ENCODE measurements at regions of chr7 and their contacts with region 1.

Region 1: DNA sequence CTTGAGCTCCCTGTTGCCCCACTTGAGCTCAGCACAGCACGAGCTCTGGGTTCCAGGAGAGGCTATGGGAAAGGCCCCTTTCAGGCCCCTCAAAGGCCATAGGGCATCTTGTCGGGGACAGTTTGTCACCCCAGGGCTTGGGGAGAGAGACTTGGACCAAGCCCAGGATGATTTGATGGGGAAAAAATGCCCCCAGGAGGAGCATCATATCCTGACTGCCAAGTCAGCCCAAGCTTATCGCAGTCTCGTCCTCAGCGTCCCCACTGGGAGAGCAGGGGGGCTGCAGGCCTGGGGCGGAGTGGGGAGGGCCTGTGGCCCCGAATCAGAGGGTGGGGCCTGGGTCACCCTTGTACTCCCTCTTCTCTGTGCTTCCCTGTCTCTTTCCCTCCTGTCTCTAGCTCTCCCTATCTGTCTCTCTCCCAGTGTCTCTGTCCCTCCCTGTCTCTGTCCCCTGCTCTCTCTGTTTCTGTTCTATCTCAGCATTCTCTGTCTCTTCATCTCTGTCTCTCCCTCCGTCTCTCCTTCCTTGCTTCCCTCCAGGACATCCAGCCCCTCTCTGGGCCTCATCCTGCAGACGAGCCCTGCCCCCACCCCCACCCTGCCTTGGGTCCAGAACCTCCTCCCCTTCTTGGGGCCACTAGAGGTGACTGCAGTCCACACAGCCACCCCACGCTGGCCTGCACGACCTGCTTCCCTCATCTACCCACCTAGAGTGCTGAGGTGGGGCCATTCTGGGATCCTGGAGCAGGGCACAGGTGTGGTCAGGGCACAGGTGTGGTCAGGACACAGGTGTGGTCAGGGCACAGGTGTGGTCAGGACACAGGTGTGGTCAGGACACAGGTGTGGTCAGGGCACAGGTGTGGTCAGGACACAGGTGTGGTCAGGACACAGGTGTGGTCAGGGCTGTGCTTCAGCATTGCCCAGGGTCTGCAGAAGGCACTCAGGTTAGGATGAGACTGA is 17.3 kb upstream of the GRIFIN start:
- DNase-seq: no peak
- ATAC-seq: no peak
- H3K4me3 Mint-ChIP-seq: no peak overlapping the region
- H3K27ac Mint-ChIP-seq: no peak overlapping the region
- H3K4me1 Mint-ChIP-seq: peaks cover 2% of the 10 kb centered on the region
- H3K27me3 Mint-ChIP-seq: peaks cover 15% of the 10 kb centered on the region

Region 2: GRCh38 chr7:2519119-2519930 is 25.8 kb after region 1 on chr7 and contains the start of gene LFNG:
- POLR2A ChIA-PET with region 1: no interaction called
- DNase-seq: peak; percentile 96
- ATAC-seq: peak; percentile 69
- H3K4me3 Mint-ChIP-seq: peak within 1 kb of the TSS; percentile 97
- H3K27ac Mint-ChIP-seq: peak within 1 kb of the TSS; percentile 90
- H3K4me1 Mint-ChIP-seq: peaks cover 12% of the 10 kb centered on the region
- H3K27me3 Mint-ChIP-seq: no peaks in the 10 kb centered on the region
- total RNA-seq, gene LFNG: 115 to 121 TPM

Region 3: GRCh38 chr7:2555121-2556052 is 61.9 kb after region 1 on chr7 and contains the start of gene BRAT1:
- POLR2A ChIA-PET with region 1: interaction called, 12 read pairs
- DNase-seq: peak; percentile 95
- ATAC-seq: peak; percentile 83
- H3K4me3 Mint-ChIP-seq: peak within 1 kb of the TSS; percentile 89
- H3K27ac Mint-ChIP-seq: peak within 1 kb of the TSS; percentile 92
- H3K4me1 Mint-ChIP-seq: peaks cover 25% of the 10 kb centered on the region
- H3K27me3 Mint-ChIP-seq: no peaks in the 10 kb centered on the region
- total RNA-seq, gene BRAT1: 33.5 to 40.1 TPM